Activated CD4-positive, alpha-beta memory T cell treated with anti-CD3 and anti-CD28 coated beads for 36 hours (primary cell): ENCODE measurements at regions of chr1 and their contacts with region 1.

Region 1: DNA sequence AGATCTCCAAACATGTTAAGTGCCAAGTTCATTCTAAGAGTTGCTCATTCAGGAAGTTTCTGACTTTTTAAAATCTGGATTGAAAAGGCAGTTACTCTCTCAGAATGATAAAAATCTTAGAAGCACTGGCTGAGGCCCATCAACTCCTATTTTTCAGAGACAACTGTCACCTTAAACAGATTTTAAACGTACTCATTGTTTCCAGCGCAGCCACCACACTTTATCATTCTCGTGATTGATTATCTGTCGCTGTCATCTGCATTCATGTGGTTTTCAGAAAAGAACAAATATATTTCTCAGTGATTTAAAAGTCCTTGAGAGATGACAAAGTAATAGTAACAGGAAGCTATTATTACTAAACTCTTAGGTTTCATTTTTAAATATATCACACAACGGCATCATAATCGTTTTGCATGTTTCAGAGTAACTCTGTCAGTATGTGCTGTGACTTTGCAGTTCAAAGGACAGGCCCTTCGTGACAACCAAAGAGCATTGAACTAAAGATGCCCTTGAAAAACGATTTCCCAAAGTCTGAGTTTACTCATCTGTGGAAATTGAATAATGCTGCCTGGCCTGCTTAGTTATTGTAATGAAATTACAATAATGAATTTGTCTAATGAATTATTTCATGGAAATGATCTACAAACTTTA is 14.9 kb upstream of the KCNK1 start:
- DNase-seq: peak; percentile 75
- H3K4me3 Mint-ChIP-seq: peak overlapping the region; percentile 27
- H3K27ac Mint-ChIP-seq: peak overlapping the region; percentile 82
- H3K4me1 Mint-ChIP-seq: peaks cover 41% of the 10 kb centered on the region
- H3K27me3 Mint-ChIP-seq: peaks cover 9% of the 10 kb centered on the region

Region 2: DNA sequence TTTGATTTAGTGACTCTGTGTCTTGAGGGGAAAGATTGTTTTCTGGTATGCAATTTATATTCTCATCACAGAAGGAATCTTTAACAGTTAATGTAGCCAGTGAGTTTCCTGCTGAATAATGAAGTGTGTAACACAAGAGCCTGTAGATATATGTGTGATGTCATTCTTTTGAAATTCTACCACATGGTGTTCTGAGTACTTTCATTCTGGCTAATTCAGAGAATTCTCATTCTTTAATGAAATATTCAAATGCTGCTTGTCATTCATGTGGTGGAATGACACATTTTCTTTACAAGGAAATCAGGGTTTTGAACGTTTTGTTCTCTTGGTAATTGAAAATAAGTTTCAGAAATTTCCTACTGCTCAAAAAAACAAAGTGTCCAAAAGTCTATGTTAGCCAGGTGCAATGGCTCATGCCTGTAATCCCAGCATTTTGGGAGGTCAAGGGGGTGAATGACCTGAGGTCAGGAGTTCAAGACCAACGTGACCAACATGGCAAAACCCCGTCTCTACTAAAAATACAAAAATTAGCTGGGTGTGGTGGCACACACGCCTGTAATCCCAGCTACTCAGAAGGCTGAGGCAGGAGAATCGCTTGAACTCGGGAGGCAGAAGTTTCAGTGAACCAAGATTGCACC is 191.9 kb before region 1 on chr1:
- CTCF ChIA-PET with region 1: no interaction called
- POLR2A ChIA-PET with region 1: no interaction called
- intact Hi-C with region 1: loop called (anchors 2 kb)
- DNase-seq: peak; percentile 23
- H3K4me3 Mint-ChIP-seq: no peak overlapping the region
- H3K27ac Mint-ChIP-seq: peak overlapping the region; percentile 81
- H3K4me1 Mint-ChIP-seq: peaks cover 26% of the 10 kb centered on the region
- H3K27me3 Mint-ChIP-seq: peaks cover 18% of the 10 kb centered on the region

Region 3: GRCh38 chr1:233613252-233614174 is 14.5 kb after region 1 on chr1 and contains the start of gene KCNK1:
- CTCF ChIA-PET with region 1: interaction called, 3 read pairs
- POLR2A ChIA-PET with region 1: interaction called, 4 read pairs
- intact Hi-C with region 1: loop called (anchors 1 kb)
- DNase-seq: peak; percentile 50
- H3K4me3 Mint-ChIP-seq: peak within 1 kb of the TSS; percentile 78
- H3K27ac Mint-ChIP-seq: peak within 1 kb of the TSS; percentile 66
- H3K4me1 Mint-ChIP-seq: peaks cover 29% of the 10 kb centered on the region
- H3K27me3 Mint-ChIP-seq: peaks cover 64% of the 10 kb centered on the region
- total RNA-seq, gene KCNK1: 5.0 to 5.2 TPM

Region 4: DNA sequence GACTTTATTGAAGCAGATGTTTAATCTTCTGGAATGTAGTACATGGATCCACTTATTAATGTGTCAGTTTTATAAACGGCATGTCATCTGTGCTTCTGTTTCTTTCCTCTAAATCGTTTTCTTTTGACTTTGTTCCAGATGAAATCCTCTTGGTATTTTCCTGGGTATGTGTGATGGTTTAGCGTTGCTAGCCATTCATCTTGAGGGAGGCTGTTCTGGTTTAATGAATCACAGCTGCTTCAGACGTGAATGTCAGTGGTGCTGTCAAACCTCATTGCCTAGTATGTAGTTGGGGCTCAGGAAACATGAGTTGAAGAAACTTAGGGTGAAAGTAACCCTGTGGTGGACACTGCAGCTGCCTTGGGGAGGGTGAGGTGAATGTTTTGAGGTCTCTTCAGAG is 48.1 kb after region 1 on chr1:
- CTCF ChIA-PET with region 1: no interaction called
- POLR2A ChIA-PET with region 1: no interaction called
- intact Hi-C with region 1: no loop called
- DNase-seq: no peak
- H3K4me3 Mint-ChIP-seq: no peak overlapping the region
- H3K27ac Mint-ChIP-seq: no peak overlapping the region
- H3K4me1 Mint-ChIP-seq: no peaks in the 10 kb centered on the region
- H3K27me3 Mint-ChIP-seq: peaks cover 4% of the 10 kb centered on the region

Region 5: GRCh38 chr1:233668725-233669294 is 69.8 kb after region 1 on chr1:
- CTCF ChIA-PET with region 1: interaction called, 3 read pairs
- POLR2A ChIA-PET with region 1: no interaction called
- intact Hi-C with region 1: loop called (anchors 1 kb)
- DNase-seq: peak; percentile 29
- H3K4me3 Mint-ChIP-seq: no peak overlapping the region
- H3K27ac Mint-ChIP-seq: no peak overlapping the region
- H3K4me1 Mint-ChIP-seq: peaks cover 5% of the 10 kb centered on the region
- H3K27me3 Mint-ChIP-seq: peaks cover 16% of the 10 kb centered on the region

Region 6: GRCh38 chr1:234398849-234399381 is 799.9 kb after region 1 on chr1:
- CTCF ChIA-PET with region 1: no interaction called
- POLR2A ChIA-PET with region 1: no interaction called
- intact Hi-C with region 1: loop called (anchors 5 kb)
- DNase-seq: no peak
- H3K4me3 Mint-ChIP-seq: peak overlapping the region; percentile 66
- H3K27ac Mint-ChIP-seq: peak overlapping the region; percentile 92
- H3K4me1 Mint-ChIP-seq: peaks cover 53% of the 10 kb centered on the region
- H3K27me3 Mint-ChIP-seq: no peaks in the 10 kb centered on the region